Caco-2 (cell line): ENCODE measurements at regions of chr12 and their contacts with region 1.

Region 1: DNA sequence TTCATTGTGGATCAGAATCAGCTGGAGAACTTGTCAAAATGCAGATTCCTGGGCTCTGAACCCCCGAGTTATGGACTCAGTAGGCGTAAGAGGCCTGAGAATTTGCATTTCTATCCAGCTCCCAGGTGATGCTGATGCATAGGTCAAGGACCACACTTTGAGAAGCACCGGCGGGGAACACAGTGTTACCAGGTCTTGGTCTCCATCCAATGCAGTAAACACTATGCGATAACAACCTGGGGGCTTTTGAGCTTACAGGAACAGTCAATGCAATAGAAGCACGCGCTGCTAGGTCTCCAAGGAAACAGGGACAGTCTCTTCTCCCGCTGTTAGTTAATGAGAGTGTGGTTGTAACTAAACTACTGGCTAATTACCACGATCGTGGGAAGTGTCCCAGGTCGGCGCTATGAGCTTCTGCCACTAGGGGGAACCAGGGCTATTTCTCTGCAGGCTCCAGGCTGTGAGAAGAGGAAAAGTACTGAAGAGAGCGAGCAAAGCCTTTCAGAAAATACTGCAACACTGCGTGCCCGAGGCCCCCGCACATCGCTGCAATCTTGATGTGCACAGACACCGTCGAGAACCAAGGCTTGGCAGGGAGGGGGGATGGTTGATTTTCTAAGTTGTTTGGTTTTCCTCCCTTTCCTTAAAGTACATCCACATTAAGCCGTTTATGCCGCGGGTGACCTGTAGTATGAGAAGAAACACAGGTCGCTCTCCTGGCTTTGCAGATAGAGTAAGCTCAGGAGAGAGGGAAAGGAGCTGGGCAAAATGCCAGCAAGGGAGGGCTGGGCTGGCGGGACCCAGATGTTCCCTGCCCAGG is 52.0 kb upstream of the KCNA1 start:
- DNase-seq: peak; percentile 74 to 87
- H3K4me3 ChIP-seq: 0 out of 2 replicates have a peak overlapping the region, but pooled peaks have one; percentile 6
- H3K4me3 Mint-ChIP-seq: peak overlapping the region; percentile 44
- H3K27ac Mint-ChIP-seq: no peak overlapping the region
- H3K4me1 ChIP-seq: 0 out of 2 replicates have a peak, but pooled peaks cover 3% of the 10 kb centered on the region
- H3K4me1 Mint-ChIP-seq: peaks cover 7% of the 10 kb centered on the region
- H3K27me3 ChIP-seq: no peaks in the 10 kb centered on the region; the same call in 1 of the 2 replicates
- H3K27me3 Mint-ChIP-seq: peaks cover 35% of the 10 kb centered on the region
- CTCF ChIP-seq: peak; percentile 94 to 97

Region 2: GRCh38 chr12:4951601-4952000 is 93.9 kb after region 1 on chr12:
- CTCF ChIA-PET with region 1: interaction called, 3 read pairs
- POLR2A ChIA-PET with region 1: no interaction called
- intact Hi-C with region 1: loop called (anchors 1 kb)
- DNase-seq: no peak
- H3K4me3 ChIP-seq: no peak overlapping the region
- H3K4me3 Mint-ChIP-seq: no peak overlapping the region
- H3K27ac Mint-ChIP-seq: no peak overlapping the region
- H3K4me1 ChIP-seq: no peaks in the 10 kb centered on the region
- H3K4me1 Mint-ChIP-seq: no peaks in the 10 kb centered on the region
- H3K27me3 ChIP-seq: peaks cover 7% of the 10 kb centered on the region
- H3K27me3 Mint-ChIP-seq: peaks cover 46% of the 10 kb centered on the region
- CTCF ChIP-seq: no peak

Region 3: DNA sequence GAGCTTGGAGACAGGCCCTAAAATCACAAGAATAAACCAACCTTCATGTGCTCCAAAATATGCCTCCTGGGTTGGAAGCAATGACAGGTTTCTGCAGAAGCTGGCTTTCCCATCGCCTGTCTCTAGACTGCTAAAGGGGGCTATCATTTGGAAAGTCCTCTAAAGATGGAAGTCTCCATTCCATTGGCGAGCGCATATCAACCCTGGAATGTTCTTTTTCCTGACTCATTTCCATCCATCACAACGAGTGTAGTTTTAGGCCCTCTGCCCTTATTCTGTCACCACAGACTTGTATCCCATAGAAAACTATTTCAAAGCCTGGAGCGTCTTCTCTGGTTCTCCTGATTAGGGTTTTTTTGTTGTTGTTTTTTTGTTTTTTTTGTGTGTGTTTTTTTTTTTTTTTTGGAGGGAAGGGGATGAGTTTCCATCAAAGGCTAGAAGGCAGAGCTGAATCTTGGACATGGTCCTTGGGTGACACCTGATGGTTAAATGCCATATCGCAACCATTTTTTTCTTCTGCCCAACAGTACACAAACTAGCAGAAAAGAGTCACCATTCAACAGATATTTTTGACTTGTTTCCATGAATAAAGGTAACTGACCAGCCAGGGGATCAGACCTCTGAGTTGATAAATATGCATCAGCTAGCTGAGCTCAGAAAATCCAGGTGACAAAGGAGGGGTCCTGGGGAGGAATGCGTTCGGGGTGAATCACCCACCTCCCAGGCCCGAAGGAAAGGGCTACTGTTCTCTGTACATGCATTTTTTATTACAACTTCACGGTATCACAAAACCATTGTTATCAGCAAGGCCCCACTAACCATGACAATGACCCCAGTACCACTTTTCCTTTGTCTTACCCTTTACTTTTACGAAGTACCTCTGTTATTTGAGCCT is 226.5 kb after region 1 on chr12:
- CTCF ChIA-PET with region 1: interaction called, 9 read pairs
- POLR2A ChIA-PET with region 1: no interaction called
- intact Hi-C with region 1: loop called (anchors 1 kb)
- DNase-seq: peak in 1 of 2 experiments; percentile 73
- H3K4me3 ChIP-seq: no peak overlapping the region
- H3K4me3 Mint-ChIP-seq: no peak overlapping the region
- H3K27ac Mint-ChIP-seq: no peak overlapping the region
- H3K4me1 ChIP-seq: no peaks in the 10 kb centered on the region
- H3K4me1 Mint-ChIP-seq: no peaks in the 10 kb centered on the region
- H3K27me3 ChIP-seq: peaks cover 3% of the 10 kb centered on the region; the same call in 1 of the 2 replicates
- H3K27me3 Mint-ChIP-seq: peaks cover 31% of the 10 kb centered on the region
- CTCF ChIP-seq: peak; percentile 78 to 82